H1 (cell line): ENCODE measurements at regions of chr4 and their contacts with region 1.

Region 1: GRCh38 chr4:180814875-180815417 is 1428.3 kb upstream of the TENM3 start:
- DNase-seq: no peak
- H3K4me3 ChIP-seq: no peak overlapping the region
- H3K27ac ChIP-seq: no peak overlapping the region
- H3K4me1 ChIP-seq: 0 out of 7 replicates have a peak, but pooled peaks cover 0 to 2% (median 0%) of the 10 kb centered on the region in 4 experiments
- H3K27me3 ChIP-seq: no peaks in the 10 kb centered on the region
- CTCF ChIP-seq: no peak
- EP300 ChIP-seq: no peak
- POLR2A ChIP-seq: no peak
- RAD21 ChIP-seq: no peak

Region 2: GRCh38 chr4:180828440-180829018 is 13.6 kb after region 1 on chr4:
- CTCF ChIA-PET with region 1: interaction called, 10 read pairs
- POLR2A ChIA-PET with region 1: no interaction called
- DNase-seq: no peak
- H3K4me3 ChIP-seq: no peak overlapping the region
- H3K27ac ChIP-seq: no peak overlapping the region
- H3K4me1 ChIP-seq: peaks cover 0 to 2% (median 0%) of the 10 kb centered on the region in 4 experiments; a peak in 2 of 7 replicates
- H3K27me3 ChIP-seq: no peaks in the 10 kb centered on the region
- CTCF ChIP-seq: peak in 2 of 3 experiments; percentile 38 to 60; a peak in 2 of 4 replicates
- EP300 ChIP-seq: no peak
- POLR2A ChIP-seq: no peak
- RAD21 ChIP-seq: peak; percentile 68 to 77